ENCODE measurements at regions of chr3 and their contacts with region 1.

Region 1: GRCh38 chr3:17444865-17445264 is 297.6 kb downstream of the TBC1D5 start:
- DNase-seq: no peak
- ATAC-seq: no peak
- H3K4me3 Mint-ChIP-seq: no peak overlapping the region
- H3K27ac Mint-ChIP-seq: no peak overlapping the region
- H3K4me1 Mint-ChIP-seq: peaks cover 7% of the 10 kb centered on the region; the same call in 1 of the 2 replicates
- H3K27me3 Mint-ChIP-seq: no peaks in the 10 kb centered on the region
- CTCF ChIP-seq: no peak

Region 2: DNA sequence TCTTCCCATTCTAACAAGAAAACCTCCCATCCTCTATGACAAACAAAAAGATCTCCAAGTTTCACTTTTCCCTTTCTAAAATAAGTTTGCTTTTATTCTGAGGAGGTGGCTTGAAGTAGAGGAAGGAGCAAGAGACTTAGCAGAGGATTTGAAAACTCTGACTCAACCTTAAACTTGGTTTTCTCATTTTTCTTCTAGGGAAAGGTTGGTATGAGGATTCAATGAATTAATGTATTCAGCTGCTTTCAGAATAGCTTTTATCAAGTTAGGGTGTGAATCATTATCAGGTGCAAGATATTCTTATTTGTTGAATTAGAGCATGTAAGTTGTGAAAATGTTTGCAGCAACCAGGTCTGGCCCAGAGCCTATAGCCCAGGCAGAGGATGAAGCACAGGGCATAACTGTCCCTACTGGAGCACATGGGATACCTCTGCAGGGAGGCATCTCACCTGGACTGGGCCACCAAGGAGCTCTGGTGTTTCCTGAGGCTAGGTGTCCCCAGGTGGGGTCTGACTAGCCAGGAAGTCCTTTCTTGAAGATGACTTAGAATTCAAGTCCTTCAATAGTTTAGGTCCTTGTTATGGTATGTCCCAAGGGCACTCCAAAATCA is 938.0 kb after region 1 on chr3:
- CTCF ChIA-PET with region 1: no interaction called
- POLR2A ChIA-PET with region 1: interaction called, 10 read pairs
- DNase-seq: no peak
- ATAC-seq: peak; percentile 55
- H3K4me3 Mint-ChIP-seq: no peak overlapping the region
- H3K27ac Mint-ChIP-seq: peak overlapping the region; percentile 79
- H3K4me1 Mint-ChIP-seq: peaks cover 45% of the 10 kb centered on the region
- H3K27me3 Mint-ChIP-seq: no peaks in the 10 kb centered on the region
- CTCF ChIP-seq: no peak

Measured in WTC11 (cell line).